ENCODE measurements at regions of chr12 and their contacts with region 1.

Region 1: DNA sequence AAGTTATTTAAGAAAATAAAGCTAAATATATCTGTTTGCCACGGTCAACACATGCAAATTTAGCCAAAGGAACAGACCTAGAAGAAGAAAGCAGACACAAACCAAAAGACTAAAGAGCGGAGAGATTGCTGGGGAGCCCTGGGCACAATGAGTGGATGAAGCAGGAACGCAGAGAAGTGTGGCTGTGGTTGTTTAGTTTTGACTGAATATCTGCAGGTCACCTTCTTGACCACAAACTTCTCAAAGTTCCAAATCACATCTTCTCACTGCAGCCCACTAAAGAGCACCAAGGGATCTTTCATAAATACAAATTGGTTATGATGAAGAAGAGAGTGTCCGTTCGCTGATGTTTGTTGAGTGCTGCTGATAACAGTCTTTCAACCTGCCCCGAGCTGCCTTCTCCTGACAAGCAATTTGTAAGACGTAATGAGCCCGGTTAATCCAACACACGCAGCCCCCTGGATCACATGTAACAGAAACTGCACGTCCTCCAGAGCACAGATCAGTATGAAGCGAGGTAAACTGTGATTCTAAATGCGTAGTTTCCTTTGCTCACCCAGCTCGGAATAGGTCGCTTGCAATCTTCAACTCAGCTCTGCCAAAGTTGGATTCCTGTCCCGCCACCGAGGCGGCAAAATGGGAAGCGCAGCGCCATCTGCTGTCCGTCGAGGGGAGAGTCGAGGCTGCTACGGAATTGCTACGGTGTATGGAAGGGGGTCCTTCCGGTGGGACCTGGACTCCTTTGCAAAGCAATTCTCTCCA is 120.8 kb downstream of the GXYLT1 start:
- DNase-seq: peak; percentile 67
- H3K4me3 Mint-ChIP-seq: peak overlapping the region; percentile 19
- H3K27ac Mint-ChIP-seq: no peak overlapping the region
- H3K4me1 Mint-ChIP-seq: peaks cover 10% of the 10 kb centered on the region
- H3K27me3 Mint-ChIP-seq: peaks cover 10% of the 10 kb centered on the region

Region 2: DNA sequence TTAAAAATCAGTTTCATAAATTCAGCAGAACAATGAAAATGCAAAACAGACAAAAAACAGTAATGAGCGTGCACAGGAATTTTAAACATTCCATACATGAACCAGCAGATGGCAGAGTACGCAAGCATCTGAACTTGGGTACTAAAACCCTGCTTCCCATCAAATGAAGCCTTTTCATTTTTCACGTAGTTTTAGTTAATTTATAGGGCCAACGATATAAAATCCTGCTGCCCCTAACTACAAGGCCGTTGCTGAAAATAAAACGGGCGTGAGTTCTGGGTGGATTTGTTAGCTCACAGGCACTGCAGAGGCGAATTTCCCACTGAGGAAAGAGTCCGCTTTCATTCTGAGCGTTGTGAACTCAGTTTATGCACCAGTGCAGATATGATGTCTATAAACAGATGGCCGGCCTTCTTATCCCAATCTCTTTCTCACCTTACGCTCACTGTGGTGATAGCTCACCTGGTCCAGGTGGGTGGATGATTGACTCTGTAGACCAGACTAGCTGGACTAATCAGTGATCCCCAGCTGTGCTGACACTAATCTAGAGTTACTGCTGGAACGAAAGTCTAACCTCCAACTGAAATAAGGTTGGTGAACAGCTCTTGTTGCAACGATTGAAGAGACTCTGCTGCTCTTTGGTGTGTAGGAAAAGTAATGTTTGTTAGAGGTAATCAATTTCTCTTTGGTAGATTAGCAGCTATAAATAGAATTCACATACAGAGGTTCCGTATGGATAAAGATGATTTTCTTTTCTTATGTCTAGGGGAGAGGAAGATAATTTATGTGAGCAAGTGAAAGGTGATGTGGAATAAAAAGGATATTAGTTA is 746.6 kb before region 1 on chr12:
- CTCF ChIA-PET with region 1: interaction called, 19 read pairs
- POLR2A ChIA-PET with region 1: no interaction called
- DNase-seq: no peak
- H3K4me3 Mint-ChIP-seq: no peak overlapping the region
- H3K27ac Mint-ChIP-seq: no peak overlapping the region
- H3K4me1 Mint-ChIP-seq: no peaks in the 10 kb centered on the region
- H3K27me3 Mint-ChIP-seq: no peaks in the 10 kb centered on the region